Caco-2 (cell line): ENCODE measurements at regions of chr11 and their contacts with region 1.

Region 1: DNA sequence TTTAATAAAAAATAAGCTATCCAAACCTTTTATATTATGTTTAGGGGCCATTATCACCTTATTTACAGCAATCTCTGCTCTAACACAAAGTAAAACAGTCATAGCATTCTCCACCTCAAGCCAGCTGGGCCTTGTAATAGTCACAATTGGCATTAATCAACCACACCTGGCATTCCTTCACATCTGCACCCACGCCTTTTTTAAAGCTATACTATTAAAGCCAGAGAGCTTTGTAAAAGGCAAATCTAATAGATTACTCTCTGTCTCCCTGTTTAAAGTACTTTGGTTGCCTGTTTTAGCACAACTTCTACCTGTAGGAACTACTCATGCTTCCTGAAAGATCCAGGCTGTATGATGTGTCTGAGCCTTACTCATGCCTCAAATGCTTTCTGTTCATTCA is 113.1 kb downstream of the CSNK2A3 start:
- DNase-seq: no peak
- H3K4me3 ChIP-seq: no peak overlapping the region
- H3K4me3 Mint-ChIP-seq: no peak overlapping the region
- H3K27ac Mint-ChIP-seq: no peak overlapping the region
- H3K4me1 ChIP-seq: no peaks in the 10 kb centered on the region
- H3K4me1 Mint-ChIP-seq: no peaks in the 10 kb centered on the region
- H3K27me3 ChIP-seq: no peaks in the 10 kb centered on the region; the same call in 1 of the 2 replicates
- H3K27me3 Mint-ChIP-seq: peaks cover 4% of the 10 kb centered on the region
- CTCF ChIP-seq: no peak

Region 2: DNA sequence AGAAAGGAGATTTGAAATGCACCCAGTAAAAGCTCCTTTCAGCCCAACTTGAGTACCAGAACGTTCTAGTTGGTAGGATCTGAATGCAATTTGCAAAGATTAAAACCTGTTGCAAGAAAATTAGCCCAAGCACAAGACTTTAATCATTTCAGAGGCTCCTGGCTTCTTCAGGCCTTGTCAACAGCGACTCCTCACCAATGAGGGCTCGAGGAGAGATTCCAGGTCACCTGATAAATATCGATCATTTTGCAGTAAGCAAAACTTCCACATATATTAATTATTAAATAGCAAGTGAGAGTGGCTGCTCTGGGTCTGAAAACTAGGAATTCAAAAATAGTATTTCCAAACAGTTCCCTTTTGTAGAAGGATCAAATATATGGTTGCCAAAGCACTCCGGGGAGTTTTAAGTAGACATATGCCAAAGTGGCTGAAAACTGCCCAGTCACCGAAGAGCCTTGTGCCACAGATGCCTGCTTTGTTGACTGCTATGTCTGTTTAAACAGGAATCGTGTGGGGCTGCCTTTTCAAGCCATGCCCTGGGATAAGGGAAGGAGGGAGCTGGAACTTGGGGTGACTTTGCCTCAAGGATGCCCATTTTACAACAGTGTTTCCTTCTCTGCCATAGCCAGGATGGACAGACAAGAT is 49.1 kb after region 1 on chr11:
- CTCF ChIA-PET with region 1: no interaction called
- POLR2A ChIA-PET with region 1: no interaction called
- intact Hi-C with region 1: no loop called
- DNase-seq: no peak
- H3K4me3 ChIP-seq: no peak overlapping the region
- H3K4me3 Mint-ChIP-seq: no peak overlapping the region
- H3K27ac Mint-ChIP-seq: no peak overlapping the region
- H3K4me1 ChIP-seq: no peaks in the 10 kb centered on the region
- H3K4me1 Mint-ChIP-seq: no peaks in the 10 kb centered on the region
- H3K27me3 ChIP-seq: no peaks in the 10 kb centered on the region
- H3K27me3 Mint-ChIP-seq: peaks cover 9% of the 10 kb centered on the region
- CTCF ChIP-seq: no peak

Region 3: DNA sequence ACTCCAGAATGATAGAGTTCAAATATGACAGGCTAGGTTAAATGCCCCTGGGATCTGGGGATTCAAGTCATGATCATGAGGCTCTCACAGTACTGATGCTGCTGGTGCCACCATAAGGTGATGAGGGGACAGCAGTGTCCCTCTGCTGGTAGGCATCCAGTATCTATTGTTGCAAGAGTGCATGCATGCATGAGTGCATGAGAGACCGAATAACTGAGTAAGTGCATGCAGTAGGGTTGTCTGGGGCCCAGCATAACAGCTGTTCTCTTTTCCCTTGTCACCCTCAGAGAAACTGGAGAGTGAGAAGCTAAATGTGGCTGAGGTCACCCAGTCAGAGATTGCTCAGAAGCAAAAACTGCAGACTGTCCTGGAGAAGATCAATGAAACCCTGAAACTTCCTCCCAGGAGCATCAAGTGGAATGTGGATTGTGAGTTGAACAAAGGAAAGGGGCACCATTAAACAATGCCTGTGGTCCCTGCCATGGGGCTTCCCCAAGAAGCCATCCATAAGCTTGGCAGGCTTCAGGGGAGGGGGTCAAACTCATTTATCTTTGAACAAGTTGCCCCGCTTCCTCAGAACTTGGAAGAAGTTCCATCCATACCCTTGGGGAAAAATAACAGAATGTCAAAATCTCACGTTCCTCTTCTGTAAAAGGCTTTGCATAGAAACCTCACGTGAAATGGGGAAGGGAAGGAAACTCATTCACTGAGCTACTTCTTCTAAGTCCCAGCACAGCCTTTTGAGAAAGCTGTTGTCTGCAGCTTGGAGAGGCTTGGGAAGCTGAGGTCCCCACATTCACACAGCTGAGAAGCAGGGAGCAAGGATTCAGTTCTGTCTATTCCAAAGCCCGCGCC is 1256.4 kb after region 1 on chr11:
- CTCF ChIA-PET with region 1: no interaction called
- POLR2A ChIA-PET with region 1: interaction called, 13 read pairs
- intact Hi-C with region 1: no loop called
- DNase-seq: no peak
- H3K4me3 ChIP-seq: no peak overlapping the region
- H3K4me3 Mint-ChIP-seq: no peak overlapping the region
- H3K27ac Mint-ChIP-seq: no peak overlapping the region
- H3K4me1 ChIP-seq: peaks cover 4% of the 10 kb centered on the region; the same call in 1 of the 2 replicates
- H3K4me1 Mint-ChIP-seq: no peaks in the 10 kb centered on the region
- H3K27me3 ChIP-seq: no peaks in the 10 kb centered on the region
- H3K27me3 Mint-ChIP-seq: no peaks in the 10 kb centered on the region
- CTCF ChIP-seq: peak; percentile 12 to 46